Tibial artery (tissue), 4 donors: ENCODE measurements at regions of chr11 and their contacts with region 1.

Region 1: GRCh38 chr11:70755410-70756161 is 357.3 kb downstream of the CTTN start:
- DNase-seq: peak; percentile 55 to 72
- H3K4me3 ChIP-seq: no peak overlapping the region
- H3K27ac ChIP-seq: no peak overlapping the region
- H3K4me1 ChIP-seq: peaks cover 0 to 7% (median 0%) of the 10 kb centered on the region in 4 donors
- H3K27me3 ChIP-seq: peaks cover 0 to 27% of the 10 kb centered on the region in 2 donors
- CTCF ChIP-seq: peak; percentile 82 to 85

Region 2: DNA sequence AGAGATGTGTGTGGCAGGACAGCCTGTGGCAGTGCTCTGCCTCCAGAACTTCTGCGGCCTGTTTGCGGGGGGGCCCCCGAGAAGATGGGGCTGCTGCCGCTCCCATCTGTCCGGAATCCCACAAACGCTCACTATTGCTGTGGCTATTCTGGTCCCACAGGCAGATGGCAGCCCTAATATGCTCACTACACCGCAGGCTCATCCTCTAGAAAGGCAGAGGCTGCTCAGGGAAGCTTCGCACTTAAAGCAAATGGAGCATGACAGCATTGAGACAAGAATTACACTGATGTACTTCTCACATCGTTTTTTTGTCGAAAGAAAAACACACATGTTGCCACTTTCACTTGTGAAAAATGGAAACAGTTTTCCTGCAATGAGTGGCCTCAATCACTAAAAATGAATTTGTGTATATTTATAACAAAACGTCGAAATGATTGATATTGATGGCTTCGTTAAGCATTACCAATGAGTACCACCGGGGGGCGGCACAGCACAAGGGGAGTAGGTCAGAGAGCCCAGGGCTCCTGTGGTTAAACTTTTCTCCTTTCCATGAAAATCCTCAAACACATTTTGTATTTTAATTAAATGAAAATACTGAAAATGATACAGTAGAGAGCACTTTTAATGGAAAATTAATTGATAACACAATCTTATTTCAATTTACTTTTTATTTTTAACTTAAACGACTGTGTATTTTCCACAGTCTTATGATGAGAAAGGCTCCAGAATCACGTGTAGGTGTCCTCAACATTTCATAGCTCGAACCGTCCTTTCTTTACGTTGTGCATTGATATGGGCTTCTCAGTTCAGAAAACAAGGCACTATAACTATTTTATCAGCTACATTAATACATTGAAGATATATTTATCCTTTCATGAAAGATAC is 288.1 kb before region 1 on chr11:
- intact Hi-C with region 1: loop called (anchors 5 kb)
- DNase-seq: peak in 1 of 2 donors; percentile 66
- H3K4me3 ChIP-seq: no peak overlapping the region
- H3K27ac ChIP-seq: no peak overlapping the region
- H3K4me1 ChIP-seq: no peaks in the 10 kb centered on the region
- H3K27me3 ChIP-seq: peaks cover 0 to 36% of the 10 kb centered on the region in 2 donors
- CTCF ChIP-seq: peak; percentile 71 to 83

Region 3: GRCh38 chr11:70577948-70578347 is 177.6 kb before region 1 on chr11:
- intact Hi-C with region 1: no loop called
- DNase-seq: peak in 1 of 2 donors; percentile 47
- H3K4me3 ChIP-seq: no peak overlapping the region
- H3K27ac ChIP-seq: no peak overlapping the region
- H3K4me1 ChIP-seq: no peaks in the 10 kb centered on the region
- H3K27me3 ChIP-seq: peaks cover 0 to 31% of the 10 kb centered on the region in 2 donors
- CTCF ChIP-seq: no peak

Region 4: GRCh38 chr11:70694371-70694770 is 61.2 kb before region 1 on chr11:
- intact Hi-C with region 1: no loop called
- DNase-seq: no peak
- H3K4me3 ChIP-seq: no peak overlapping the region
- H3K27ac ChIP-seq: no peak overlapping the region
- H3K4me1 ChIP-seq: no peaks in the 10 kb centered on the region
- H3K27me3 ChIP-seq: peaks cover 0 to 5% of the 10 kb centered on the region in 2 donors
- CTCF ChIP-seq: no peak